T-cell (primary cell): ENCODE measurements at regions of chr14 and their contacts with region 1.

Region 1: DNA sequence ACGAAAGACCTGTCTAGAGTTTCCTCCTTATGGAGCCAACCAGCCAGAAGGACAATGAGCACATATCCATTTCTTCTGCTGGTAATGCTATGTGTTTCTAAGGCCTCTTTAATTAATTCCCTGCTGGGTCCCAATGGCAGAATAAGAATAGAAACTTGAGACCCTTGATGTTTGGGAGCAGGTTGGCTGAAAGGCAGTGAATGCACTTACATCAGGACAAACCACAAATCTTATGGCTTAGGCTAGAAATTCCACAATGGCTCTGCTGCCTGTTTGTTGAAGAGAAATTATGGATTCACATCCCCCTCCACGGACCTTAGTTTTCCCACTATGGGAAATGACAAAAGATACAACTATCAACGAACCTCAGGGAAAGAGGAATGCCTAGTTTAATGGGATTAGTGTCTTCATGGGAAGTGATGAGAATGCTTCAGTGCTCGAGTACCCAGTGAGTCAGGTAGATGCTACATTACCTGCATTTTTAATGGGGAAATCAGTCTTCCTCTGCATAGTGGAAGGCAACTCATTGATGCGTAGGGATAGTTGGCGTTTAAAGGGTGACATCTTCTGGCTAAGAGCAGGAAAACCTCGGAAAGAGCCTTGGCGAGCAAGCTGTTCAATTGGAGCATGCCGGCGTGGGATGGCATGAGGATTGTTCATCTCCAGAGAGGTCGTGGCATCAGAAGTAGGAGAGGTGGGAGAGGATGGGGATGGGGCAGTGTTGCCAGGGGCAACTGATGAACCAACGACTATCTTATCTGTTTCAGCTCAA is 46.5 kb downstream of the PAPLN start:
- DNase-seq: no peak
- ATAC-seq: no peak
- H3K4me3 ChIP-seq: no peak overlapping the region
- H3K4me3 Mint-ChIP-seq: no peak overlapping the region
- H3K27ac ChIP-seq: no peak overlapping the region
- H3K27ac Mint-ChIP-seq: no peak overlapping the region
- H3K4me1 ChIP-seq: no peaks in the 10 kb centered on the region
- H3K4me1 Mint-ChIP-seq: peaks cover 3 to 8% (median 6%) of the 10 kb centered on the region in 3 donors
- H3K27me3 ChIP-seq: no peaks in the 10 kb centered on the region
- H3K27me3 Mint-ChIP-seq: no peaks in the 10 kb centered on the region

Region 2: DNA sequence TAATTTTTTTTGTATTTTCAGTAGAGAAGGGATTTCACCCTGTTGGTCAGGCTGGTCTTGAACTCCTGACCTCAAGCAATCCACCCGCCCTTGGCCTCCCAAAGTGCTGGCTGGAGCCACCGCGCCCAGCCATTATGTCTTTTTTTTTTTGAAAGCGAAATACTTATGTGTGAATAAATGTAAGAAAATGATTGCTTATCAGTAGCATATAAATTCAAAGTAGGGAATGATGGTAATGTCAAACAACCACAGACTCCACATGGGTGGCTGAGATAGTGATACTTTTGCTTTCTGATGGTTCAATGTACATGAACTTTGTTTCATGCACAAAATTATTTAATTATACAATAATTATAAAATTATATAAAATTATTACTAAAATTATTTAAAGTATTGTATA is 29.4 kb after region 1 on chr14:
- CTCF ChIA-PET with region 1: no interaction called
- POLR2A ChIA-PET with region 1: interaction called in 1 of 2 experiments, 10 read pairs
- DNase-seq: no peak
- ATAC-seq: no peak
- H3K4me3 ChIP-seq: no peak overlapping the region
- H3K4me3 Mint-ChIP-seq: no peak overlapping the region
- H3K27ac ChIP-seq: no peak overlapping the region
- H3K27ac Mint-ChIP-seq: no peak overlapping the region
- H3K4me1 ChIP-seq: no peaks in the 10 kb centered on the region
- H3K4me1 Mint-ChIP-seq: peaks cover 1 to 14% (median 11%) of the 10 kb centered on the region in 3 donors
- H3K27me3 ChIP-seq: no peaks in the 10 kb centered on the region
- H3K27me3 Mint-ChIP-seq: no peaks in the 10 kb centered on the region

Region 3: GRCh38 chr14:73369428-73369827 is 85.6 kb after region 1 on chr14:
- CTCF ChIA-PET with region 1: no interaction called
- POLR2A ChIA-PET with region 1: interaction called in 1 of 2 experiments, 11 read pairs
- DNase-seq: no peak
- ATAC-seq: no peak
- H3K4me3 ChIP-seq: no peak overlapping the region
- H3K4me3 Mint-ChIP-seq: no peak overlapping the region
- H3K27ac ChIP-seq: no peak overlapping the region
- H3K27ac Mint-ChIP-seq: no peak overlapping the region
- H3K4me1 ChIP-seq: no peaks in the 10 kb centered on the region
- H3K4me1 Mint-ChIP-seq: peaks cover 3 to 4% (median 4%) of the 10 kb centered on the region in 3 donors
- H3K27me3 ChIP-seq: no peaks in the 10 kb centered on the region
- H3K27me3 Mint-ChIP-seq: no peaks in the 10 kb centered on the region